Calu3 (cell line): ENCODE measurements at regions of chr3 and their contacts with region 1.

Region 1: GRCh38 chr3:105686278-105686897 is 182.4 kb downstream of the CBLB start:
- DNase-seq: no peak
- H3K4me3 Mint-ChIP-seq: no peak overlapping the region
- H3K27ac Mint-ChIP-seq: no peak overlapping the region
- H3K4me1 Mint-ChIP-seq: no peaks in the 10 kb centered on the region
- H3K27me3 Mint-ChIP-seq: no peaks in the 10 kb centered on the region
- CTCF ChIP-seq: peak; percentile 42

Region 2: DNA sequence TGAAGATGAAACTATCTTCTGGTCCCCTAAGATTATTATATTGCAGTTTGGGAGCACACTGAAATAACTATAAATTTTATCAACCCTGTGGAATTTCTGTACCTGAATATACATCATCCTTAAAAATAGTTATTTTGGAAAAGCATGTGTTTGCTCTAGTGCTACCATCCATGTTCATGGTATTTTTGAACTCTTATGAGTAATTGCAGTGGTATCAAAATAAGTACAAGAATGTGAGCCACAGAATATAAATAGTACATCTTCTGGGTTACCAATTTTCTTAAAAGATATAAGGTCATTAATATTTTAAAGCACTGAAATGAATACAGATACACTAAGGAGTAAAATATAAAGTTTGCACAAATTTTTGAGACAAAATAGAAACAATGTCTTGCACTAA is 24.1 kb before region 1 on chr3:
- CTCF ChIA-PET with region 1: no interaction called
- intact Hi-C with region 1: no loop called
- DNase-seq: no peak
- H3K4me3 Mint-ChIP-seq: no peak overlapping the region
- H3K27ac Mint-ChIP-seq: no peak overlapping the region
- H3K4me1 Mint-ChIP-seq: no peaks in the 10 kb centered on the region
- H3K27me3 Mint-ChIP-seq: no peaks in the 10 kb centered on the region
- CTCF ChIP-seq: no peak

Region 3: DNA sequence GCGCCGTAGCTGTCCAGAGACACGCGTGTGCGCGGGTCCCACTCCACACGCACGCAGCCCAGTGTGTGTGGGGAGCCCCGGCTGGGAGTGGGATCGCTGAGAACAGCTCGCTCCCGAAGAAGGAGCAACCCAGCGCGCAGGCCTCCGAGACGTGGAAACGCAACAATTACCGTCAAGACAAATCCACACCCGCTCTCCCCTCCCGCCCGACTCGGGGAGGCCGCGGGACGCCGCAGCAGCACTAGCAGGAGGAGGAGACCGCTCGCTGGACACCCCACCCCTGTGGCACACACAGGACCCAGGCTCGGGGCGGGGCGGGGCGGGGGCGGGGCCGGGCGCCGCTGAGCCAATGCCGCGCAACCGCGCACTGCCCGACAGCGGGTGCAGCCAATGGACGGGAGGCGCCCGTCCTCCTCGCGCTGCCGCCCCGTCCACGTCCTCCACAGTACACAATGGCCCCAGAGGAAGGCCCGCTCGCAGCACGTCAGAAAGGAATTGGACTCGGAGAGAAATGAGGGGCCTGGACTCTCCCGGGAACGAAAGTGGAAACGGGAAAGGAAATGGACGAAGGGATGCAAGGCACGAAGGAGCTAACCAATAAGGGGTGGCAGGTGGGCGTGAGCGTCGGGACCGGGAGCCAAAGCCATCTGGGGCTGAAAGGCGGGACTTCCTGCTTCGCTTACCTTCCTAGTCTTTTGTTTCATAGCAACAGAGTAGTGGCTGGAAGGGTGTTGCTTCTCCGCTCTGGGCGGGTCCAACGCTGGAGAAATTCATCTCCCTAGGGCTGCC is 182.5 kb after region 1 on chr3 and contains the start of gene CBLB:
- CTCF ChIA-PET with region 1: no interaction called
- intact Hi-C with region 1: loop called (anchors 10 kb)
- DNase-seq: peak; percentile 84
- H3K4me3 Mint-ChIP-seq: peak within 1 kb of the TSS; percentile 92
- H3K27ac Mint-ChIP-seq: peak within 1 kb of the TSS; percentile 86
- H3K4me1 Mint-ChIP-seq: peaks cover 19% of the 10 kb centered on the region
- H3K27me3 Mint-ChIP-seq: no peaks in the 10 kb centered on the region
- CTCF ChIP-seq: no peak
- total RNA-seq, gene CBLB: 17.9 and 26.2 TPM in 2 replicates

Region 4: DNA sequence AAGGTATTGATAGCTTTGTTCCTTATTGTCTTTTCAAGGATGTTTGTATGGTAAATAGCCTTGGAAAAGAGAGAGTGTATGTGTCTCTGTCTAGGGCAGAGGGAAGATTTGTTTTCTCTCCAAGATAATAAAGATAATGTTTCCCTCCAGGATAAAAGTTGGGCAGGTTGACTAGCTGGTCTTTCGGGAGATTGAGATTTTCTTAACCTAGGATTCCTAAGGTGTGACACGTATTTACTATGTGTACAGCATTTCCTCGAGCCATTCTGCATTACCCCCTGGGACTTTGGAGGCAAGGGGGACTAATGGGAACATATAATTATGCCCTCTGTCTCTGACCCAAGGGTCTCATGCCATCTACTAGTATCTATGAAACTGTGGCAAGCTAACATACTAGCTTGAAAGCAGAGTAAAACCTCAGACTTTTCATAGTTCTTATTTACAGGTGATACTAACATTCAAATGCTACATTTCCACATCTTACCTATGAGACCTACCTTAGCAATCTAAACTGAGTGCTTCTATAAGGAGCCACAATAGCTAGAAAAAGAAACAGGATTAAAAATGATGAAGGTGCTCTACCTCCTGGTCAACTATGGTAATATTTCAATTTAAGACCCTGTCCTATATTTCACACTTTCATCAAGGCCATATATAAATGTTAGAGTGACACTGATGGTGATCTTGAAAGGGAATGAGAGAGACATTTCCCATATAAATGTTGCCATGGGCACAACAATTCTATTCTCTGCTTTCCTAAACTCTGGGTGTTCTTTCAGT is 435.3 kb after region 1 on chr3:
- CTCF ChIA-PET with region 1: no interaction called
- intact Hi-C with region 1: loop called (anchors 2 kb)
- DNase-seq: no peak
- H3K4me3 Mint-ChIP-seq: no peak overlapping the region
- H3K27ac Mint-ChIP-seq: no peak overlapping the region
- H3K4me1 Mint-ChIP-seq: peaks cover 11% of the 10 kb centered on the region
- H3K27me3 Mint-ChIP-seq: no peaks in the 10 kb centered on the region
- CTCF ChIP-seq: no peak

Region 5: GRCh38 chr3:106206146-106206545 is 519.8 kb after region 1 on chr3:
- CTCF ChIA-PET with region 1: no interaction called
- intact Hi-C with region 1: loop called (anchors 5 kb)
- DNase-seq: no peak
- H3K4me3 Mint-ChIP-seq: no peak overlapping the region
- H3K27ac Mint-ChIP-seq: no peak overlapping the region
- H3K4me1 Mint-ChIP-seq: no peaks in the 10 kb centered on the region
- H3K27me3 Mint-ChIP-seq: no peaks in the 10 kb centered on the region
- CTCF ChIP-seq: no peak

Region 6: DNA sequence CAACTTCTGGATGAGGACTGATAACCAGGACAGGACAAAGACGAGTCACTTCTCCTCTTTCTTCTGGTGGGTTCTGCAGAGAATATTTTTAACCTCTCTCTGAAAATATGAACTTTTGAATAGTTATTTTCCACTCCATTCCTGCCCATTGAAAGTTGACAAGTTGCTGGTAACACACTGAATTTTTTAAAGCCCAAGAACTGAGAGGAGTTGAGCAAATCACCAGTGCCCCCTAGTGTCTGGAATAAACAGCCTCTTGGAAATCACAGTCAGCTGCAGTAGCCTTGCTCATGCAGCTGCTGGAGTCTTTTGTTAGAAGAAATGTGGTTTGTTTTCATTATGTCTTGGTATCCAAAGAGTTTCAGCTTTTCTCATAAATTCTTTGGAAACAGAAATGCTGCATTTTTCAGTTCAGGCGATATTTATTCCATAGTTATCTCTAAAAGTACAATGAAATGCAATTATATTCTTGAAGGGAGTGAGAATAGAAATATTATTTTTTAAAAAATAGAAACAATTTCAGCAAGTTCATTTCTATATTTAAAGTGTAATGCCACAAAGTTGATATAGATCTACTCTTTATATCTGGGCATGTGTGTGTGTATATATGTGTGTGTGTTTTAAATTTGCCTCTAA is 923.4 kb after region 1 on chr3:
- CTCF ChIA-PET with region 1: no interaction called
- intact Hi-C with region 1: loop called (anchors 1 kb)
- DNase-seq: peak; percentile 69
- H3K4me3 Mint-ChIP-seq: no peak overlapping the region
- H3K27ac Mint-ChIP-seq: no peak overlapping the region
- H3K4me1 Mint-ChIP-seq: peaks cover 23% of the 10 kb centered on the region
- H3K27me3 Mint-ChIP-seq: no peaks in the 10 kb centered on the region
- CTCF ChIP-seq: peak; percentile 52